Activated naive CD4-positive, alpha-beta T cell treated with anti-CD3 and anti-CD28 coated beads, Interleukin-2, amount 10 ng/mL, durations not matched to agents 7 days and 5 days (primary cell): ENCODE measurements at regions of chr2 and their contacts with region 1.

Region 1: DNA sequence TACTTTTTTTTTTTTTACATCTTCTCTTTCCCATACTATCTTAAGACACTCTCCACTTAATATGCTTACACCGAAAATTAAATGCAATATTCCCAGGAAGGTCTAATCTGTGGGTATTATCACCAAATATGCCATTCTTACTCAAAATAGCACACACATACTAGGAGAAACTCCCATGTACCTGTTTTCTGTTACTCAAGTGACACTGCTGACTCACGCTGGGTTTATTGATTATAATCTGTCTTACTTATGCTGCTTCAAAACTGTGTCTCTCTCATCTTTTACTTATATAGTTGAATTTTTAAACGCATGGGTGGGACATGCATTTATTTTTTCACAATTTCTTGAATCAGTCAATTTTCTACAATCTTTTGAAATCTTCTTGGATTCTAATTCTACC is 29.9 kb downstream of the MRPL19 start:
- DNase-seq: no peak
- H3K4me3 Mint-ChIP-seq: no peak overlapping the region
- H3K27ac Mint-ChIP-seq: no peak overlapping the region
- H3K4me1 Mint-ChIP-seq: peaks cover 3% of the 10 kb centered on the region
- H3K27me3 Mint-ChIP-seq: no peaks in the 10 kb centered on the region

Region 2: GRCh38 chr2:75640621-75641121 is 35.8 kb before region 1 on chr2:
- CTCF ChIA-PET with region 1: interaction called, 50 read pairs
- DNase-seq: peak; percentile 67
- H3K4me3 Mint-ChIP-seq: no peak overlapping the region
- H3K27ac Mint-ChIP-seq: no peak overlapping the region
- H3K4me1 Mint-ChIP-seq: peaks cover 2% of the 10 kb centered on the region
- H3K27me3 Mint-ChIP-seq: peaks cover 13% of the 10 kb centered on the region

Region 3: DNA sequence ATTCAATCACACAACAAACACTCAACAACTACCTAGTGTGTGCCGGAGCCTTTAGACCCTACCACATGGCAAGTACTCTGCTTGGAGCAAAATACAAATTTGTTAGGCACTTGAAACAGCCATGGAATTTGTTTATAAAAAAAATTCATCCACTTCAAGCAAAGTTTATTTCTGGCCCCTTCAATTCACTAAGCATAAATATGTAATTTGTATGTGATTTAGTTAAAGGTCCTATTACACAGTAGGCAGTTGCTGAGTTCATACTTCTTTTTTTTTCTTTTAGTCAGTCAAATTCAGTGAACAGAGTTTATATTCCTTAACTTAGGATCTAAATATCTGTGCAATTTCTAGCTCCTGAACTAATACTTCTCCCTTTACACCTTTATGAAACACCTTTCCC is 11.7 kb after region 1 on chr2:
- CTCF ChIA-PET with region 1: interaction called, 10 read pairs
- DNase-seq: no peak
- H3K4me3 Mint-ChIP-seq: no peak overlapping the region
- H3K27ac Mint-ChIP-seq: no peak overlapping the region
- H3K4me1 Mint-ChIP-seq: no peaks in the 10 kb centered on the region
- H3K27me3 Mint-ChIP-seq: no peaks in the 10 kb centered on the region